ENCODE measurements at regions of chr5 and their contacts with region 1.

Region 1: DNA sequence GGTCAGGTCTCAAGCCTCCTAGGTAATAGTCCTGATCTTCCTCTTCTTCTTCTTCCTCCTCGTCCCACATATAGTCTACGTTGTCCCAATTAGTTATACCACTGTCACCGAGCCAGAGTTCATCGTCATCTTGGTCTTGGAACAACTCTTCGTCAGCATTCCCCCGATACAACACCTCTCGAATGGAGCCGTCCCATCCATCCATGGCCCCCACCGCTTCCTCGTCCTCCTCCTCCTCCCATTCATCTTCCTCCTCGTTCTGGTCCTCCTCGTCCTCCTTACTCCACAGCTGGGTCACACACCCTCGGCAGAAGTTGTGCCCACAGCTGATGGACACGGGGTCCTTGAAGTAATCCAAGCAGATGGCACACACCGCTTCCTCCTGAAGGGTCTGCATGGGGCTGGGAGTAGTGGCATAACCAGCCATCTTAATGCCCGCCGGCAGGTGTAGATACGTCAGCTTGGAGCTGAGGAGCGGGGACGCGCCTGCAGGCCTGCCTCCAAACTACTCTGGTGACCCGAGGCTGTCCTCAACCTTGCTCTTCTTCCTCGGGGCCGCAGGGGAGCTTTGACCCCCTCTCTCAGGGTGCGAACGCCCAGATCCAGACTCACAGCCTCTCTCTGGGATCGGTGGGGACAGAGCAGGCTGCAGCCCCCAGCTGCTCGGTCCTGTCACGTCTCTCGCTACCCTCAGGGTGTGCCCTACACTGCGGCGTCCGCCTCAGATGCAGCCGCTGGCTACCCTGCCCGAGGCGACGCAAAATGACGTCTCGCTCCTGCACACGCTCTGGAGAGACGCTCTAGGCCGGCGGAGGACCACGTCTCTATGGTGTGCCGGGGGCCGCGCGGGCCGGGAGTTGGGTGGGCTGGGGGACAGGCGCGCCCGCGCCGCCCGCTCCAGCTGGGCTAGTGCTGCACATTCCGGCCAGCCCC is at the start of gene TRIM52:
- DNase-seq: peak; percentile 91
- H3K4me3 Mint-ChIP-seq: peak within 1 kb of the TSS; percentile 86
- H3K27ac Mint-ChIP-seq: peak within 1 kb of the TSS; percentile 89
- H3K4me1 Mint-ChIP-seq: peaks cover 23% of the 10 kb centered on the region
- H3K27me3 Mint-ChIP-seq: no peaks in the 10 kb centered on the region
- CTCF ChIP-seq: no peak
- total RNA-seq, gene TRIM52: 12.5 and 16.1 TPM in 2 replicates

Region 2: GRCh38 chr5:180136630-180137381 is 1123.8 kb before region 1 on chr5:
- CTCF ChIA-PET with region 1: no interaction called
- POLR2A ChIA-PET with region 1: no interaction called
- intact Hi-C with region 1: no loop called
- DNase-seq: no peak
- H3K4me3 Mint-ChIP-seq: no peak overlapping the region
- H3K27ac Mint-ChIP-seq: no peak overlapping the region
- H3K4me1 Mint-ChIP-seq: peaks cover 9% of the 10 kb centered on the region
- H3K27me3 Mint-ChIP-seq: peaks cover 35% of the 10 kb centered on the region
- CTCF ChIP-seq: no peak

Region 3: GRCh38 chr5:180852495-180852894 is 408.2 kb before region 1 on chr5:
- CTCF ChIA-PET with region 1: no interaction called
- POLR2A ChIA-PET with region 1: no interaction called
- intact Hi-C with region 1: no loop called
- DNase-seq: no peak
- H3K4me3 Mint-ChIP-seq: no peak overlapping the region
- H3K27ac Mint-ChIP-seq: no peak overlapping the region
- H3K4me1 Mint-ChIP-seq: peaks cover 4% of the 10 kb centered on the region
- H3K27me3 Mint-ChIP-seq: no peaks in the 10 kb centered on the region
- CTCF ChIP-seq: no peak

Region 4: DNA sequence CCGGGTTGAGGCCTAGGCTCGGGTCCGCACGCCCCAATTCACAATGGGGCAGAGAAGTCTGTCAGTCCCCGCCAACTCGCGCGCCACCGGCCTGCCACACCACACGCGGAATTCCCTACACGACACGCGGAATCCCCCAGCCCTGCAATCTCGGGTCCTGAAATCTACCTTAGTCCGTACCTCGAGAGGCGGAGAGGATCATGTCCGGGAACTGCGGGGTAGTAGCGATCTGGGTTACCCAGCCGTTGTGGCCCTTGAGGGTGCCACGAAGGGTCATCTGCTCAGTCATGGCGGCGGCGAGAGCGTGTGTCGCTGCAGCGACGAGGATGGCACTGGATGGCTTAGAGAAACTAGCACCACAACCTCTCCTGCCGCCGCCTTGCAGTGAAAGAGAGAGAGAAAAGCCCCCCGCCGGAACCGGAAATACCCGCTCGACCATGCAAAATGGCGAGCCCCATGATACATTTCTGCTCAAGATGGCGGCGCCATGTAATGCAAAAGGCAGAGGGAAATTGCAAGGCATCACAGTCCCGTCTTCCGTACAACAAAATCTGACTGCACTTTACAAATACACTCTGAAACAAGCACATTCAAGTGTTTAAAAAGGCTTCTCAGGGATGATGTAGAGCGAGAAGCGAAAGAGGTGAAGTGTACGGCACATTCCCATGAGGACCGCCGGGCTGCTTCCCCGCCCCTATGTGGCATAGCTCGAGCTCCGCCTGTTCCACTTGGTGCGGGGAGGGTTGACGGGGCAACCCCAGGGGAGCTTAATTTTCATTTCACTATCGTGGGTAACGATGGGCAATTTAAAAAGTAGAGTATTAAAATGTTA is 16.9 kb before region 1 on chr5 and contains the start of gene RACK1:
- CTCF ChIA-PET with region 1: interaction called, 8 read pairs
- POLR2A ChIA-PET with region 1: interaction called, 476 read pairs
- intact Hi-C with region 1: loop called (anchors 2 kb)
- DNase-seq: peak; percentile 96
- H3K4me3 Mint-ChIP-seq: peak within 1 kb of the TSS; percentile 99
- H3K27ac Mint-ChIP-seq: peak within 1 kb of the TSS; percentile 99
- H3K4me1 Mint-ChIP-seq: peaks cover 48% of the 10 kb centered on the region
- H3K27me3 Mint-ChIP-seq: no peaks in the 10 kb centered on the region
- CTCF ChIP-seq: no peak
- total RNA-seq, gene RACK1: 2,995 and 4,050 TPM in 2 replicates